GM13976 (cell line): ENCODE measurements at regions of chr13 and their contacts with region 1.

Region 1: GRCh38 chr13:101757446-101758039 is 305.1 kb downstream of the ITGBL1 start:
- DNase-seq: peak; percentile 17
- CTCF ChIP-seq: peak; percentile 26

Region 2: DNA sequence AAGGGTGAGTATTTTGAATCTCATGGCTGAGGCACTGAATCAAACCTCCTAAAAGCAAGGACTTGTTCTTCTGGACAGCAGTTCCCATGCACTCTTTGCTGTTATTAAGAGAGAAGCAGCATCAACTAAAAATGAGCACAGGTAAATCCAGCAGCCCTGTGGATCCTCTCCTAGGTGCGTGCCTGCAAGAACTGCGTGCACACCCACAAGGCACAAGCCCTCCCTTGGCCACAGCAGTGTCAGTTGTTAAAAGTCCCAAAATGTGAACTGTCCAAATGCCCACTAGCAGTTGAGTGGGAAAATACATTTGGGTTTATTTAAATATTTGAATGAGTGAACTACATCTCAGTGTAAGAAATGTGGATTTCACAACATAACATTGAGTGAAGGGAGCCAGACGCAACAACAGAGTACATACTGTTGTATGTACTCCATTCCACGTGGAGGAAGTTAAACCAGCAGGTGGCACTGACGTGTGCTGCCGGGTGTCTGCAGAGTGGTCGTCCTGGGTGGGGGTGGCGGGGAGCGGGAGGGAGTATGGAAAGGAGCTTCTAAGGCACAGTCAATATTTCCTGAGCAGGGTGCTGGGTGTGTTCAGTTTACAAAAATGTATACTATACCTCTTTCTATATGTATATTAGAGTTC is 607.7 kb before region 1 on chr13:
- in situ Hi-C with region 1: loop called (anchors 25 kb)
- DNase-seq: no peak
- CTCF ChIP-seq: no peak

Region 3: DNA sequence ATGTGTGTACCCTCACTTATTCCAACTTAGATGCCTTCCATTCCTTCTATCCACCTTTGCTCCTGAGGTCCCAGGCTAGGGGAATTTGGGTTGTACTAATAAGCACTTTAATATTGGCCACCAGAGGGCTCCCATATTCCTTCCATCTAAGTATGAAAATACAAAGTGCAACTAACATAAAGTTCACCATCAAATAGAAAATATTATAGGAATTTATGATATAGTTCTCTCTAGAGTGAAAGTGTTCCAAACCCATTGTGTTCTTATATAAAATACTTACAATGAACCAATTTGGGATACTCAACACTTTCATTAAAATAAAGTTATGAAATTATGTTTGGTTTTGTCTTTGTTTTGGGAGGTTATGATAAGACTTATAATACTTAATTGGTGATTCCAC is 242.8 kb before region 1 on chr13:
- in situ Hi-C with region 1: loop called (anchors 10 kb)
- DNase-seq: peak; percentile 3
- CTCF ChIP-seq: peak; percentile 60